HAP-1 (cell line): ENCODE measurements at regions of chr3 and their contacts with region 1.

Region 1: DNA sequence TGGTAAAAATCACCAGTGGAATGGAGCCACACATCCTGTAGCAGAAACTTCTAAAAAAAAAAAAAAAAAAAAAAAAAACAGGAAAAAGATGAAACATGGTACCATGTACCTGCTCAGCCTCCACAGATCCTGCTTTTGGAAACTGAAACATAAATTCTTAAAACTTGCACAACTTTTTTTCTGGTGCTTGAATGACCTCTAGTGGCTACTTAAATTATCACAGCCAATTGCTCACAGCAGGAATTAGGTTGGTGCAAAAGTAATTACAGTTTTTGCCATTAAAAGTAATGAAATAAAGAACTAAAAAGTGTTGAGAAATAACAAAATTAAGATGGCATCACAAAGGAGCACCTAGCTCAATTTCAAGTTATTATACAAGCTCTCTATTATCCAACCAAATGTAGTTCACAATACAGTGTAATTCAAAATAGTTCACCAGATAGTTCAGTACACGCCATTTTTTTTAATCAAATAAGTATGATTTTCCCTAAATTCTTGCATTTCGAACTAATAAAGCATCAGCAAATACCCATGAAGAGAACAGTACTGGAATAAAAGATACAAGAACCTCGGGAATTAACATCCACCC is 80.6 kb downstream of the ULK4 start:
- DNase-seq: peak; percentile 13 to 36
- H3K4me3 ChIP-seq: no peak overlapping the region
- H3K4me1 ChIP-seq: no peaks in the 10 kb centered on the region
- H3K27me3 ChIP-seq: no peaks in the 10 kb centered on the region

Region 2: DNA sequence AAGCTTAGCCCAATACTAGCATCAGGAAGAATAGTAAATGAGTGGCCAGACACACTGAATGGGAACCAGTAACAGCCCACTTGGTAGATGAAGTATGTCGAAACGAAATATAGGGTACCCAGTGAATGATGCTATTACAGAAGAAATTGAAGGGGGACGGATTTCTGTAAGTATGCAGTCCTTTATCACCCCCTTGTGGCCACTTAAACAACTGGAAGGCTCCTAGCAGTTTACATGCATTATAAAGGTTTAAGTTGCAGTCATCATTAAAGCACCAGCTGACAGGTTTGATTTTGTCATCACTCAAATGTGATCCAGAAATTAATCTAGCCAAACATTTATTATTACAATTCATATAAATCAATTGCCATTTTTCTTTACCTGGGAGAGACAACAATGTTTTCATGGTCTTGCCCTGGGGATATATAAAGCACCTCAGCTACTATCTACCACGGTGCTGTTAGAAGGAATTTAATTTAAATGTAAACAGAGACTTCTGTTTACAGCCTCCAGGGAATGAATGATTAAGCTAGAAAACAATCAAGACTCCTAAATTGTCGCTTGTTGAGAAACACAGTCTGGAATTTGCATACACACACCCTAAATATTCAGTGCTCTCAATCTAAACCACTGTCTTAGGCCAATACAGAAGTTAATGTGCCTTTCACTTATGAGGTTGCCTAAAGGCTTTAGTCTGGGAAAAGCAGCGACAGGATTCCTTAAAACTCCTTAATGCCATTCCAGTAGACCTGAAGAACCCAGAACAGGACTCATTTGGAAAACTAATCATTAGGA is 1564.1 kb before region 1 on chr3:
- in situ Hi-C with region 1: loop called (anchors 10 kb)
- DNase-seq: peak; percentile 67 to 68
- H3K4me3 ChIP-seq: no peak overlapping the region
- H3K4me1 ChIP-seq: peaks cover 9% of the 10 kb centered on the region
- H3K27me3 ChIP-seq: no peaks in the 10 kb centered on the region

Region 3: DNA sequence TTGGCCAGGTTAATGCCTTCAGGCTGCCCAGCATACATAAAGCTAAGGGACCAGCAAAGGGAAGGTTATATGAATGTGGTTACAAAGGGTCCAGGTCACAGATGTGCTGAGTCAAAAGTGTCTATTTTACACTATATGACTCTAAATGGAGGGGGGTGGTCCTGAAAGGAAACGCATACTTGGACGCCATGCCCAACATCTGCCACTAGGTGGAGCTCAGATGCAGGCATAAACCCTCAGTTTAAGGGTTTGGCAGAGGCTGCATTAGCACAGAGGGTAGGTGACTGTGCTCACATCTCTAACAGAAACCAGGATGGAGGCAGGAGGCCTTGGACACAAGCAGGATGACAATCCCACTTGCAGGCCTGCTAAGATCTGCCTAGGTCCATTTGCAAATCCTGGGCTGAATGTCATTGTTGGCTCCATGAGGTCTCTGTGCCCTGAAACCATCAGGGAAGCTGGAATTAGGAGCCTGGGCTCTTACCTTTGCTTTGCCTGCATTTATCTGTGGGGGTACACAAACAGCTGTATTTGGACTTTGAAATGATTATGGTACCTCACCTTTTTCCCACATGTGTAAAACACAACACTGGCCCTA is 1300.7 kb before region 1 on chr3:
- in situ Hi-C with region 1: loop called (anchors 5 kb)
- DNase-seq: peak; percentile 59 to 82
- H3K4me3 ChIP-seq: no peak overlapping the region
- H3K4me1 ChIP-seq: no peaks in the 10 kb centered on the region
- H3K27me3 ChIP-seq: peaks cover 11% of the 10 kb centered on the region

Region 4: DNA sequence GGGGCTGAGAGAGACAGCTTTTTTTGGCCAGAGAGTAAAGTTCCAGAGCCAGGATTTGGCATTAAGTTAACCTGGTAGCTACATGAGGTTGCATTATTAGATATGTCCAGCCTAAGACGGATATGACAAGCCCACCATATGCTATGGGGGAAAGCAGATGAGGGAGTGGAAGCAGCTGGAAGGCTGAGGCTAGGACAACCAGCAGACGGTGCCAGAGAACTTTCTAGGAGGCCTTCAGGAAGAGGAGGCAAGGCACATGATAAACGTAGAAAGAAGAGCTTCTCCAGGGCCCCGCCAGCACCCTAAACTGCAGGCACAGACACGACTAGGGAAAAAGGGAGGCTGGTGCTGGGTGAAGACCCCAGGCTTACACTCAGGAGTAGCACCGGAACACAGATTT is 595.0 kb before region 1 on chr3:
- in situ Hi-C with region 1: no loop called
- DNase-seq: no peak
- H3K4me3 ChIP-seq: no peak overlapping the region
- H3K4me1 ChIP-seq: no peaks in the 10 kb centered on the region
- H3K27me3 ChIP-seq: no peaks in the 10 kb centered on the region

Region 5: GRCh38 chr3:42443819-42444436 is 562.6 kb after region 1 on chr3:
- in situ Hi-C with region 1: loop called (anchors 25 kb)
- DNase-seq: peak; percentile 78 to 90
- H3K4me3 ChIP-seq: no peak overlapping the region
- H3K4me1 ChIP-seq: peaks cover 3% of the 10 kb centered on the region; the same call in 1 of the 2 replicates
- H3K27me3 ChIP-seq: peaks cover 43% of the 10 kb centered on the region